MCF 10A (cell line): ENCODE measurements at regions of chr3 and their contacts with region 1.

Region 1: DNA sequence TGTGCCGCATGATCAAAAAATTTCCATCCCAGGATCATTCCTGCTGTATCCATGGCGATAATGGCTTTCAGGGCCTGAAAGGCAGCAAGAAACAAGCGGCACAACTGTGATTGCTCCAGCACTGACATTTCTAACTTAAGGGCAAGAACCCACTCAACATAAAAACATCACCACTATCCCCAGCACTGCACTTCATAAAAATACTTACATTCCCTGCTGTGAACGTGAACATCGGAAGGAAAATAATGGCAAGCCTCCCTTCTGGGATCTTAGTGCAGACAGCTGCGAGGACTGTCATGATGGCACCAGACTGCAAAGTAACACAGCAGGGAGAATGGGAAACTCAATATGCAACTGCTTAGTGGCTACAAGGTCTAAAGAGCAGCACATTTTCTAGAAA is 8.1 kb upstream of the MAP6D1 start:
- DNase-seq: no peak
- H3K4me3 Mint-ChIP-seq: no peak overlapping the region
- H3K27ac Mint-ChIP-seq: no peak overlapping the region
- H3K4me1 Mint-ChIP-seq: no peaks in the 10 kb centered on the region
- H3K27me3 Mint-ChIP-seq: no peaks in the 10 kb centered on the region
- CTCF ChIP-seq: no peak

Region 2: DNA sequence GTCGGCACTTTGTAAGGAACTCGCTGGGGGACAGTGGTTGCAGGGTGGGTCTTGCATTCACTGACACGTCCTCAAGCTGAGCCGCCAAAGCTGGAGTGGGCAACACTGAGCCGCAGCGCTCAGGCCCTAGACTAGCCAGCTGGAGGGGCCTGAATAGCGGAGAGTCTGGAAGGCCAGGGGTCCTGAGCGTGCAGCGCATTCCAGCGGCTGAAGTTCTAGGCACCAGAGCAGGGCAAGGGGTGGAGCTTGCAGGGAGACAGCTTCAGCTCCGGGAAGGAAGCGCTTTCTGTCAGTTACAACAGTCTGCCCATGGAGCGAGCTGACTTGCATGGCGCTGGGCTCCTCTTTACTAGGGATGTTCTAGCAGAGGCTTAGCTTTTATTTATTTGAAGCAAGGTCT is 10.9 kb before region 1 on chr3:
- CTCF ChIA-PET with region 1: no interaction called
- POLR2A ChIA-PET with region 1: no interaction called
- intact Hi-C with region 1: no loop called
- DNase-seq: no peak
- H3K4me3 Mint-ChIP-seq: no peak overlapping the region
- H3K27ac Mint-ChIP-seq: no peak overlapping the region
- H3K4me1 Mint-ChIP-seq: no peaks in the 10 kb centered on the region
- H3K27me3 Mint-ChIP-seq: no peaks in the 10 kb centered on the region
- CTCF ChIP-seq: no peak

Region 3: DNA sequence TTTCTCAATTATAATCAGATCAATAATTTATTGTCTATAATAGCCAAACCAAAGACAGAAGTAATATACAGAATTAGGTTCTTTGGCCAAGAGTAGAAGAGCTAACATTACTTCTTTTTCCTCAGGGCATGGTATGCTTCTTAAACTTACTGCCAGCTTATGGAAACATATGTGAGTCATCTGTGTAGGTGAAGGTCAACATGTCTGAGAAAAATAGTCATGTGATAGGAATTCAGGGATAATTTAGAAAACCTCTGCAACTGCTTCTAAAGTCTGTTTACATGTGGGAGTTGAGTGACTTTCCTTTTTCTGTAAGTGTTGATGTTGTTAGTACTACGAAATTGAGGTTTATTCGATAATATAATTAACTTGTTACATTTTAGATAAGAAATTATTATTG is 11.1 kb after region 1 on chr3:
- CTCF ChIA-PET with region 1: interaction called, 3 read pairs
- POLR2A ChIA-PET with region 1: interaction called, 10 read pairs
- intact Hi-C with region 1: no loop called
- DNase-seq: peak; percentile 81
- H3K4me3 Mint-ChIP-seq: no peak overlapping the region
- H3K27ac Mint-ChIP-seq: peak overlapping the region; percentile 84
- H3K4me1 Mint-ChIP-seq: peaks cover 17% of the 10 kb centered on the region
- H3K27me3 Mint-ChIP-seq: no peaks in the 10 kb centered on the region
- CTCF ChIP-seq: no peak